ENCODE measurements at regions of chr6 and their contacts with region 1.

Region 1: DNA sequence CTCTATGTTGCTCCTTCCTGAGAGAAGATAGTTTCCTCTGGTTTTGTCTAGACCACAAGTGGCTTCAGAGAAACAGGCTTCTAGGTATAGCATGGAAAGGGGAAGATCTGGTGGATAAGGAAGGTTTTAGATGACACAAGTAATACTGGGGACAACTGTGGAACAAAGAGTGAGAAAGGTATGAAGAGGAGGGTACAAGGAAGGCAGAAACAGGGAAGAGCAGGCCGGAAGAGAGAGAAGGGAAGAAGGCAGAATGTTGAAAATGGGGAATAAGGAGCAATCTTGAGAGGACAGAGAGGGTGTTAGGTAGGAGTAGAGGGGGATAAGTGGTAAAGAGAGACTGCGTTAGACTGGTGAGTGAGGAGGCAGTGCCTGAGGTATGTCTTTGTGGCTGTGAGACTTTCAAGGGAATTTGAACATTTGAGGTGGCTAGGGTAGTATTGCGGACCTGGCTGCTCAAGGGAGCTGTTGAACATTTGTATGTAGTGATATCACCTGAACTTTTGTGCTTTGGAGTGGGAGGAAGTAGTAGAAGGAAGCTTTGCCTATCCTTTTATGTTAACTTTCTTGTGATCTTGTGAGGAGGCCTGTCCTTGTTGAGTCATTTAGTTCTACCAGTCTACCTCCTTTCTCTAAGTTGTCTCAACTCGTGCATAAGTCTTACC is 69.5 kb downstream of the FOXO3 start:
- DNase-seq: peak in 7 of 9 donors; percentile 32 to 61 (median 44)
- ATAC-seq: peak; percentile 74
- H3K4me3 ChIP-seq: no peak overlapping the region
- H3K4me3 Mint-ChIP-seq: peak overlapping the region; percentile 1 to 81 (median 52)
- H3K27ac ChIP-seq: no peak overlapping the region
- H3K27ac Mint-ChIP-seq: peak overlapping the region in 5 of 9 donors; percentile 2 to 66 (median 34)
- H3K4me1 ChIP-seq: peaks cover 14 to 17% of the 10 kb centered on the region in 2 donors
- H3K4me1 Mint-ChIP-seq: peaks cover 30 to 90% (median 84%) of the 10 kb centered on the region in 7 donors
- H3K27me3 ChIP-seq: no peaks in the 10 kb centered on the region
- H3K27me3 Mint-ChIP-seq: no peaks in the 10 kb centered on the region

Region 2: DNA sequence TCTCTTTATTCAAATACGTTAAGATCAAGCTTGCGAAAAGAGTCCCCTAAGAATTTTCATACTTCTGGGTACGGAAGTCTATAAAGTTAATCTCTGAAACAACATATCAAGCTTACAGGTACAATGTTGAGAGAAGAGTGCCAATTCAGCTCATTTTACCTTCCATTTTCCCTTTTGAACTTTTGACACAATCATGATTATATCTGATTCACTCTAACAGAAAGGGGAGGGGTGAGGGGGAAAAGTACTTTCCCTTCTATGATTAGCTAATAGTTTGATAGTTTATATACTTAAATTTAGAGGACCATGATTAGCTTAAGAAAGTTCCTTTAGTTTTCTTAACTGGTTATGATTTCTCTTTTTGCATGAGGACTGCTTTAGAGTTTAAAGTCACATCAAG is 402.9 kb before region 1 on chr6:
- CTCF ChIA-PET with region 1: no interaction called
- POLR2A ChIA-PET with region 1: no interaction called
- intact Hi-C with region 1: no loop called
- DNase-seq: no peak
- ATAC-seq: no peak
- H3K4me3 ChIP-seq: no peak overlapping the region
- H3K4me3 Mint-ChIP-seq: no peak overlapping the region
- H3K27ac ChIP-seq: no peak overlapping the region
- H3K27ac Mint-ChIP-seq: peak overlapping the region in 1 of 9 donors; percentile 48
- H3K4me1 ChIP-seq: no peaks in the 10 kb centered on the region
- H3K4me1 Mint-ChIP-seq: peaks cover 16 to 42% (median 29%) of the 10 kb centered on the region in 7 donors
- H3K27me3 ChIP-seq: no peaks in the 10 kb centered on the region
- H3K27me3 Mint-ChIP-seq: no peaks in the 10 kb centered on the region

Region 3: DNA sequence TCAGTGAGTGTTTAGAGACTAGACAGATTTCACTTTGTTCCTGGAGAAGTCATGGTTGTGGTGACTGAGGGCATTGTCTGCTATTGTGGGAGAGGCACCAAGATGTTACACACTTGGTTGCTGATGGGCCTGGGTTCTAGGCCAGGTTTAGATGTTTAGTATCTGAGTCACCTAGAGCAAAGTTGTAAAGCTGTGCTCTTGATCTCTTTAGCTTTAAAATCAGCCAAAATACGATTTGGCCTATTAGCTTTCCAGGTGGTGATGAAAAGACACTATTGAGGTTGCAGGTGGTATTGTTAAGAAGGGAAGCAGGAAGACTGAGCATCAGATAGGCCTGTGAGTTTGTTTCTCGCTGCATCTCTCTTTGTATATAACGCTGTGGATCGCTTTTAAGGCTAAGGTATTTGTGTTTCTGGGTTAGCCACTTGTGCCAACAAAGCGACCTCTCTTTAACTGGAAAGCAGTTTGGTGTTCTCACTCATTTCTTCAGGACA is 20.9 kb before region 1 on chr6:
- CTCF ChIA-PET with region 1: no interaction called
- POLR2A ChIA-PET with region 1: no interaction called
- intact Hi-C with region 1: loop called in 1 of 2 experiments (anchors 2 kb)
- DNase-seq: no peak
- ATAC-seq: no peak
- H3K4me3 ChIP-seq: no peak overlapping the region
- H3K4me3 Mint-ChIP-seq: peak overlapping the region in 1 of 10 donors; percentile 9
- H3K27ac ChIP-seq: no peak overlapping the region
- H3K27ac Mint-ChIP-seq: peak overlapping the region in 3 of 9 donors; percentile 3 to 77 (median 52)
- H3K4me1 ChIP-seq: no peaks in the 10 kb centered on the region
- H3K4me1 Mint-ChIP-seq: peaks cover 0 to 72% (median 53%) of the 10 kb centered on the region in 7 donors
- H3K27me3 ChIP-seq: no peaks in the 10 kb centered on the region
- H3K27me3 Mint-ChIP-seq: peaks cover 0 to 14% (median 0%) of the 10 kb centered on the region in 5 donors

Region 4: GRCh38 chr6:108651340-108652227 is 21.4 kb after region 1 on chr6:
- CTCF ChIA-PET with region 1: no interaction called
- POLR2A ChIA-PET with region 1: interaction called, 4 read pairs
- intact Hi-C with region 1: loop called in 1 of 2 experiments (anchors 2 kb)
- DNase-seq: no peak
- ATAC-seq: no peak
- H3K4me3 ChIP-seq: no peak overlapping the region
- H3K4me3 Mint-ChIP-seq: no peak overlapping the region
- H3K27ac ChIP-seq: no peak overlapping the region
- H3K27ac Mint-ChIP-seq: peak overlapping the region in 1 of 9 donors; percentile 43
- H3K4me1 ChIP-seq: peaks cover 6 to 10% of the 10 kb centered on the region in 2 donors
- H3K4me1 Mint-ChIP-seq: peaks cover 4 to 68% (median 43%) of the 10 kb centered on the region in 7 donors
- H3K27me3 ChIP-seq: no peaks in the 10 kb centered on the region
- H3K27me3 Mint-ChIP-seq: peaks cover 0 to 5% (median 0%) of the 10 kb centered on the region in 5 donors

Region 5: DNA sequence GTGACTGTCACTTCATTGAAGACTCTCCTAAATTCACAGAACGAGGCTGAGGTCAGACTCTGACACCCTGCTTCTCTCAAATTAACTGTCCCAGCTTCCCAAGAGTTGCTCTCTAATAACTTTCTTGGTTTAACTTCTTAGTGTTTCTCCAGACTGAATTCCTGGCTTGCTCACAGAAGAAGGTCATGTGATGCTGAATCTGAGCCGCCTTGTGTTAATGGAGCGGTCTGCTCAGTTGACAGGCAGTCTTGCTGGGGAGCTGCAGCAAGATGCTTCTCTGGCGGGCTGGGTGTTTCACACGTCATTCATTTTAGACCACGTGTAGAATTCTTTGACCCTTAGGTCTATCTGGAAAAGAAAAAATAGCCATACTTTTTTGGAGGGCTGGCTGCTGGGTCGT is 37.8 kb after region 1 on chr6:
- CTCF ChIA-PET with region 1: no interaction called
- POLR2A ChIA-PET with region 1: no interaction called
- intact Hi-C with region 1: no loop called
- DNase-seq: no peak
- ATAC-seq: no peak
- H3K4me3 ChIP-seq: no peak overlapping the region
- H3K4me3 Mint-ChIP-seq: no peak overlapping the region
- H3K27ac ChIP-seq: no peak overlapping the region
- H3K27ac Mint-ChIP-seq: no peak overlapping the region
- H3K4me1 ChIP-seq: no peaks in the 10 kb centered on the region
- H3K4me1 Mint-ChIP-seq: peaks cover 8 to 57% (median 39%) of the 10 kb centered on the region in 7 donors
- H3K27me3 ChIP-seq: no peaks in the 10 kb centered on the region
- H3K27me3 Mint-ChIP-seq: peaks cover 0 to 2% (median 0%) of the 10 kb centered on the region in 5 donors